ENCODE measurements at regions of chr5 and their contacts with region 1.

Region 1: DNA sequence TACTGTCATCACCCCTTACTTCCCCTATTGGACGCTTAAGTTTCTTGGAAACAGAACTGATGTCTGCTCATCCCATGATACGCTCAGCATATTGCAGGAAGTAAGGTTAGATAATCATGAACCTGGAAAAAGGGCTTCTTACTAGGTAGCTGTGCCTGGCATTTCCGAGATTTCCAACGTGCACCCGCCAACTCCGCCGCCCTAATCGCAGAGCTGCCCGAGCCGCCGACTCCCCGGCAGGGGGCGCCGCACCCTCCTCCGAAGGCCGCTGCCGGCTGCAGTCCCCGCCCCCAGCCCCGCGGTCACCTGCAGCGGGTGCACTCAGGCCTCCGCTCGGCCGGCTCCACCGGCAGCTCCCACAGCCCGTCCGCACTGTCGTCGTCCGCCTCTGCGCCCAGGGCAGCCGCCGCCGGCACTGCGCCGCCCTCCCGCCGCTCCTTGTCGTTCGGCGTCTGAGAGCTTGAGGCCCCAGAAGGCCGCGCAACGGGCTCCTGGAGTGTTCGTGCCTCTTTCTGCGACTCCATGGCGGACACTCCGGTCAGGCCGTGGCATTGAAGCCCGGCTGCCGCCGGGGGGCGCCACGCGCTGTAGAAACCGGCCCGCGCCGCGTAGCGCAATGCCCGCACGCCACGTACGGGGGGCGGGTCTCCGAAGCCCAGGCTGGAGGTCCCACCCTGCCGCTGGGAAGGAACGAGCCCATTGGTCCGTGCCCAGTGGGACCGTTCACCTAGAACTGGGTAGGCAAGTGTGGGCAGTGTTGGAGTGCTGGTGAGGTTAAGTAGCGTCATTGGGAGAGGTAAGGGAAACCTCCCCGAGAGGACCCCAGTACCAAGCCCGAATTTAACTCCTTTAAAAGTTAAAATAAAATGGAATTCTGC is at the start of gene DTWD2:
- DNase-seq: peak; percentile 92 to 94
- ATAC-seq: peak; percentile 96 to 99 (median 98)
- H3K4me3 ChIP-seq: peak within 1 kb of the TSS; percentile 60 to 92 (median 80)
- H3K27ac ChIP-seq: peak within 1 kb of the TSS; percentile 79 to 98 (median 94)
- H3K4me1 ChIP-seq: peaks cover 0 to 29% (median 13%) of the 10 kb centered on the region in 9 donors
- H3K27me3 ChIP-seq: no peaks in the 10 kb centered on the region
- CTCF ChIP-seq: peak; percentile 80 to 95 (median 90)
- total RNA-seq, gene DTWD2: 8.9 to 14.8 (median 12.8) TPM

Region 2: DNA sequence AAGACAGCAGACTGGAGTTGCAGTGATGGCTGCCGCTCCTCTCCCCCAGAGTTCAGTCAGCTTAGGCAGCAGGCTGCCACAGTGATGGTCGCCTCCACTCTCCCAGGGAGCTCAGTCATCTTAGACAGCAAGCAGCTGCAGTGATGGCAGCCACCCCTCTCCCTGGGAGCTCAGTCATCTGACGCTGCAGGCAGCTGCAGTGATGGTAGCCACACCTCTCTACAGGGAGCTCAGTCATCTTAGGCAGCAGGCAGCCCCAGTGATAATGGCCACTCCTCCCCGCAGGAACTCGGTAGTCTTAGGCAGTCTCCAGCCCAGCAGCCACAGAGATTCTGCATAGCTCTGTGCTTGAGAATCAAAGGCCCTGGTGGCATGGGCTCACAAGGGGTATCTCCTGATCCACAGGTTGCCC is 582.6 kb before region 1 on chr5:
- intact Hi-C with region 1: no loop called
- DNase-seq: peak; percentile 6 to 17
- ATAC-seq: peak in 7 of 8 donors; percentile 53 to 87 (median 69)
- H3K4me3 ChIP-seq: no peak overlapping the region
- H3K27ac ChIP-seq: no peak overlapping the region
- H3K4me1 ChIP-seq: peaks cover 0 to 24% (median 8%) of the 10 kb centered on the region in 9 donors
- H3K27me3 ChIP-seq: no peaks in the 10 kb centered on the region
- CTCF ChIP-seq: no peak

Region 3: GRCh38 chr5:118919016-118919415 is 69.2 kb before region 1 on chr5:
- intact Hi-C with region 1: no loop called
- DNase-seq: no peak
- ATAC-seq: no peak
- H3K4me3 ChIP-seq: no peak overlapping the region
- H3K27ac ChIP-seq: no peak overlapping the region
- H3K4me1 ChIP-seq: no peaks in the 10 kb centered on the region
- H3K27me3 ChIP-seq: no peaks in the 10 kb centered on the region
- CTCF ChIP-seq: no peak

Region 4: DNA sequence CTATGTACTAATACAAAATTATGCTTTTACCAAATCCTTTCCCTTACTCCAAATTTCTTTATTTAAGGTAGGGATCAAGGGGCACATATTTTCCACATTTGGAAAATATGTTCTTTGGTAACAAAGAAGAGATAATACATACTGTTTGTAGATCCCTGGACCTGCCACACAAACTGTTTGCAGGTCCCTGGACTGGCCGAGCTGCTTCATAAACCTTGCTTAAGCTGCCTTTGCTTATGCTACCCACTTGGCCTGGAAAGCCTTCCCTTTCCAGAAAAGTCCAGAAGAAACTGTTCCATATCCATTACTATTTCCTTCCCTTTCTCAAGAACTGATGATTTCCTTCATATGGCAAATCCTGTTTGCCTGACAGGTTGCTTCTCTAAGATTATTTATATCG is 60.0 kb after region 1 on chr5:
- intact Hi-C with region 1: no loop called
- DNase-seq: no peak
- ATAC-seq: no peak
- H3K4me3 ChIP-seq: no peak overlapping the region
- H3K27ac ChIP-seq: no peak overlapping the region
- H3K4me1 ChIP-seq: peaks cover 0 to 5% (median 0%) of the 10 kb centered on the region in 9 donors
- H3K27me3 ChIP-seq: no peaks in the 10 kb centered on the region
- CTCF ChIP-seq: no peak

Region 5: GRCh38 chr5:119070828-119071572 is 82.8 kb after region 1 on chr5 and contains the start of gene DMXL1:
- intact Hi-C with region 1: loop called in 4 of 10 experiments (anchors 1 to 10 kb)
- DNase-seq: peak; percentile 99 to 100
- ATAC-seq: peak; percentile 97 to 99 (median 98)
- H3K4me3 ChIP-seq: peak within 1 kb of the TSS; percentile 50 to 99 (median 90)
- H3K27ac ChIP-seq: peak within 1 kb of the TSS; percentile 92 to 97 (median 94)
- H3K4me1 ChIP-seq: peaks cover 3 to 43% (median 31%) of the 10 kb centered on the region in 9 donors
- H3K27me3 ChIP-seq: no peaks in the 10 kb centered on the region
- CTCF ChIP-seq: no peak
- total RNA-seq, gene DMXL1: 19.7 to 36.5 (median 26.7) TPM

Region 6: DNA sequence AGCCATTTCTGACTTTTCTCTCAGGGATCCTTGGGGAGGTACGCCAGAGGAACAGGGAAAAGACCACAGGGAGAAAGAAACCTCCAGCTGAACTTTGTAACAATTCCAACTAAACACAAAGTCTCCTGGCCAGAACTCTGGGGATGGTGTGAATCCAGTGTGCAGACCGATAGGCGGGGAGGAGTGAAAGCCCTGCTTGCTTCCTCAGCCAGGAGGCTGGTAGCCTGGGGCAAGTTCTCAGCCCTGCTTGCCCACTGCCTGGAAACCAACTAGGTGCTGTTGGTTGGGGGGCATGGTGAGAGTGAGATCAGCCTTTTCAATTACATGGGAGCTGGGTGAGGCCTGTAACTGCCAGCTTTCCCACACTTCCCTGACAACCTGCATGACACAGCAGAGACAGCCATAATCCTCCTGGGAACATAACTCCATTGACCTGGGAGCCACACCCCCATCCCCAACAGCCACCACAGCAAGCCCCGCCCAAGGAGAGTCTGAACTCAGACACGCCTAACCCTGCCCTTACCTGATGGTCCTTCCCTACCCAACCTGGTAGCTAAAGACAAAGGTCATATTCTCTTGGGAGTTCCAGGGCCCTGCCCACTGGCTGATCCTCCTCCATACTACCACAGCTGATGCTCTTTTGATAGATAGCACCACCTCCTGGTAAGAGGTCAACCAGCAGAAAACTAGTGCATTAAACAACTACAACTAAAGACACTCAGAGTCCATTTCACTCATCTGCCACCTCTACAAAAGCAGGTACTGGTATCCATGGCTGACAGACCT is 267.5 kb after region 1 on chr5:
- intact Hi-C with region 1: loop called in 1 of 10 experiments (anchors 10 kb)
- DNase-seq: no peak
- ATAC-seq: peak in 1 of 8 donors; percentile 34
- H3K4me3 ChIP-seq: no peak overlapping the region
- H3K27ac ChIP-seq: no peak overlapping the region
- H3K4me1 ChIP-seq: no peaks in the 10 kb centered on the region
- H3K27me3 ChIP-seq: no peaks in the 10 kb centered on the region
- CTCF ChIP-seq: peak in 2 of 9 donors; percentile 19 to 26

Region 7: DNA sequence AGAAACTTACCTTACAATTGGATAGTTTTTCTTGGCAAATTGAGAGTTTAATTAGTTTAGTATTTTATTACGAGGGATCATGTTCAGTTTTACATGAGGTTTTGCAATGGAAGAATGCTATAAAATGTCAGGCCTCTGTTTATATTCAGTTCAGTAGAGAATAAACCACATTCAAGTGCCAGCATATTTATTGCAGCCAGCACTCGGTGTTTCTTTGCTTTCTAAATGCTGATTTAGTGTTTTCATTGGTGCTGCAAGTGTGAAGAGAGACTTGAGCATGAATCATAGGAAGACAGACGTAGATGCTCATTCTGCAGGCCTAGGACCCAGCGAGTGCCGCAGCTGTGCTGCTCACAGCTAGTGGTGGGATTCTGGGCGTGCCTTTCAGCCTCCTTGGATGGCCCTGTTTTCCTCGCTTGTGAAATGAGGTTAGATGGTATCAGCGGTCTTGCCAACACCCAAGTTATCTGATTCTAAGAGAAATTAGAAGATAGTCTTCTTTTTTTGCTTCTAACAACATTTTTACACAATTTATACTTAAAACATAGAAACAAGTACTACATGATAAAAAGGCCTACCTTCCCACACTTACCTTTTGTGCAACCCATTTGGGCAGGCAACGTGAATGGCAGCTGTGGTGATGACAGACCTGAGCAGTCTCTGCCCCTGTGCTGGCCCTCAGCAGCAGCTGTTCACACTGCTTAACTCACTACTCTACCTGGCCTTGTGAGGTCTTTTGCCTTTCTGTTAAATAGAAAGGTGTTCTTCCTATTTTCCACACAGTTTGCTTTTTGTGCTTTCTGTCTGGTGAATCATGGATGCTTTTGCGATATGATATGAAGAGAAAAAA is 340.8 kb after region 1 on chr5:
- intact Hi-C with region 1: loop called in 1 of 10 experiments (anchors 10 kb)
- DNase-seq: no peak
- ATAC-seq: no peak
- H3K4me3 ChIP-seq: no peak overlapping the region
- H3K27ac ChIP-seq: peak overlapping the region in 1 of 10 donors; percentile 84
- H3K4me1 ChIP-seq: peaks cover 0 to 98% (median 6%) of the 10 kb centered on the region in 9 donors
- H3K27me3 ChIP-seq: no peaks in the 10 kb centered on the region
- CTCF ChIP-seq: no peak

Region 8: GRCh38 chr5:119340597-119341218 is 352.5 kb after region 1 on chr5:
- intact Hi-C with region 1: loop called in 4 of 10 experiments (anchors 5 to 10 kb)
- DNase-seq: no peak
- ATAC-seq: peak in 2 of 8 donors; percentile 14 to 28
- H3K4me3 ChIP-seq: peak overlapping the region in 1 of 10 donors; percentile 26
- H3K27ac ChIP-seq: peak overlapping the region in 1 of 10 donors; percentile 79
- H3K4me1 ChIP-seq: peaks cover 0 to 98% (median 13%) of the 10 kb centered on the region in 9 donors
- H3K27me3 ChIP-seq: no peaks in the 10 kb centered on the region
- CTCF ChIP-seq: no peak